ENCODE measurements at regions of chr18 and their contacts with region 1.

Region 1: DNA sequence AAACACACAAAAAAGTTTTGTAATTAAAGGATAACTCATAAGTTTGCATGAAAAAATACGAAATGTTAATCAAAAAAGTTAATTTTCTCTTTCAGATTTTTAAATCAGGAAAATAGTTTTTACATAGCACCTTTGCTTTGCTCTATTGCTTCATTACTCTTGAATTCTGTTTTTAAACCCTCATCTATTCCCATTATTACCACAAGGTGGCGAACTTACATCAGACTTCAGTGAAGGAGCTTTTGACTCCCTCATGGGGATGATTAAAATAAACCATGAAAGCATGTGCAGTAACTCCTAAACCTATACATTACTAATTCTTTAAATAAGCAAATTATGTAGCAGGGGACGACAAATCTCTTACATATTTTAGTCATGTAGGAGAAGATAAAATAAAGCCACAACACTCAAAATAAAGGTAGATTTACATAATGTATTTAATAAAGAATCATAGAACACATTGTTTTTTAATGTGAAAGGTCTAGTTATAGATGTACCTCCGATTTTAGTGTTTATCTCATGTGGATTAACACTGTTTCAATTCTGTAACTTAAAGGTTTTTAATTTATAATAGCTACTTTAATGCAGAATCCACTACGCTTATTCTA is 105.2 kb downstream of the NETO1 start:
- DNase-seq: no peak
- ATAC-seq: no peak

Region 2: GRCh38 chr18:73136134-73136533 is 373.5 kb after region 1 on chr18:
- intact Hi-C with region 1: loop called (anchors 5 kb)
- DNase-seq: no peak
- ATAC-seq: no peak

Region 3: GRCh38 chr18:73842795-73843394 is 1080.3 kb after region 1 on chr18:
- intact Hi-C with region 1: loop called (anchors 2 kb)
- DNase-seq: no peak
- ATAC-seq: no peak

Region 4: DNA sequence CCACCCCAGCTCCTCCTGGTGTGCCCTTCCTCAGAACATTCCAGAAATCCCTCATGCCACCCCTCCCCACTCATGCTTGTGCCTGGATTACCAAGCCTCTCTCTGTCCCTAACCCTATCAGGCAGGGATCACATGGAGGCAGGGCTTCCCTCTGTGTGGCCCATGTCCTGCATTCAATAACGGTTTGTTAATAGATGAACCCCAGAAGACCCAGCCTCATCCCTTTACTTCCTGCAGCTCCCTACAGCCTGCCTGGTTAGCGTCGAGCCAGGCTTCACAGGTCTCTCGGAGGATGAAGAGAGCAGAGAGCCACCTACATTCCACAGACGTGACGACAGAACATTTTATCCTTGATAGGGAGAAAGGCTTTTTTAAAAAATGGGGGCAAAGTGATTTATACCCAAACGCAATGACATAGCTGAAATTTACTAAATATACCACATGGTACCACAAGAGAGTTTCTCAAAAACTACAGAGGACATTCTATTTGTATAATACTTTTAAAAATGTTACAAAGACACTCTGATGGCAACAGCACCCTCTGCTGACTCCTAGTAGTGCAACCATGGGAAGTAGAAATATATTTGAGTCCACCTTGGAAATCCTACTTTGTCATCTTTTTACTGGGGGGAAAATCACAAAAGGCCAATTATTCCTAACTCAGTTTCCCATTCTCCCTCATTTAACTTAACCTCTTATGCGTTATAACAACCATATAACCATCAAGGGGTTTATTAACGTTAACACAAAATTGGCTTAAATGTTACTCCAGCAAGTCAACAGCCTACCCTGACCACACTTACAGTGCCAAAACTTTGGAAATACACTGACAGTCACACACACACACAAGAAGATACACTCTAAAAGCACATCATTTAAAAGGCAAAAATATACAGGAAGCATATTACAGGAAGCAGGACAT is 1354.3 kb after region 1 on chr18:
- intact Hi-C with region 1: loop called (anchors 5 kb)
- DNase-seq: no peak
- ATAC-seq: no peak

Measured in Right ventricle myocardium inferior (tissue), 1 donor.